Activated naive CD4-positive, alpha-beta T cell treated with anti-CD3 and anti-CD28 coated beads for 36 hours (primary cell): ENCODE measurements at regions of chr1 and their contacts with region 1.

Region 1: DNA sequence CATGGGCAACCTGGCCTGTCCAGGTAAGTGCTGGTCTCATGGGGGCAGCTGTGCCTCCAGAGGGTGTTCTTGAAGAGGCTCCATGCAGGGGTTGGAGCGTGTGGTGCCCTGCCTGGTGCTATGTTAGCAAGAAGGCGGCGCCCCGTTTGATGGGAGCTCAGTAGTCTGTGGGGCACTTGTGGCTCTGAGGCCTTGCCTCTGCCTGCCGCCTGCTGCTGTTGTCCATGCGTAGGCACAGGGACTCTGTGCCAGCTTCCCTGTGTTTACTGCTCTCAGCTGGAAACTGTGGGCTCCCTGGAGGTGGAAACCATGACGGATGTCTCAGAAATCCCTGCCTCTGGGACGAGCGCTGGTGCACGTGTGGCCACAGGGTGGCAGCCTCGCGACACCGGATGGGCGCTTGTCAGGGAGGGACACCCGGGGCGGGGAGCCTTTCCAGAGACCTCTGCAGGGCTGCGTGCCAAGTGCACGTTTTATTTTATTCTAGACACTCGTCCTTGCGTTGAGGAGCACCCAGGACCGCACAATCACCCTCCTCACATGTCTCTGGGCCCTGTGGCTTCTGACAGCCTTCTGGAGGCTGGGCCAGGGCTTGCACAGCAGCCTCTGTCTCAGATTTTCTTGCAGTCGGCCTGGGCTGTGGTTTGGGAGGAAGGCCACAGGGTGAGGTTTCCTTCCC is 27.1 kb downstream of the SNAP47 start:
- DNase-seq: peak; percentile 91
- H3K4me3 Mint-ChIP-seq: no peak overlapping the region
- H3K27ac Mint-ChIP-seq: no peak overlapping the region
- H3K4me1 Mint-ChIP-seq: peaks cover 86% of the 10 kb centered on the region
- H3K27me3 Mint-ChIP-seq: no peaks in the 10 kb centered on the region

Region 2: DNA sequence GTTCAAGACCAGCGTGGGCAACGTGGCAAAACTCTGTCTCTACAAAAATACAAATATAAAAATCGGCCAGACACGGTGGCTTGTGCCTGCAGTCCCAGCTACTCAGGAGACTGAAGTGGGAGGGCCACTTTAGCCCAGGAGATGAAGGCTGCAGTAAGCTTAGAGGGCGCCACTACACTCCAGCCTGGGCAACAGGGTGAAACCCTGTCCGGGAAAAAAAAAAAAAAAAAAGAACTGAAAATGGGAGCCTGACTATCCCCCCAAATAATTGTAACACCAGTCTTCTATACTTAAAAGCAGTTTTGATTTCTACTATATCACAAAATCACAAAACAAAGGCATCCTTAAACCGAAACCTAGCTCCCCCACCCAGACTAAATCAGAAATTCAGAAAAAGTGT is 504.4 kb before region 1 on chr1:
- CTCF ChIA-PET with region 1: no interaction called
- intact Hi-C with region 1: no loop called
- DNase-seq: no peak
- H3K4me3 Mint-ChIP-seq: no peak overlapping the region
- H3K27ac Mint-ChIP-seq: no peak overlapping the region
- H3K4me1 Mint-ChIP-seq: no peaks in the 10 kb centered on the region
- H3K27me3 Mint-ChIP-seq: peaks cover 3% of the 10 kb centered on the region

Region 3: GRCh38 chr1:227563324-227564201 is 198.8 kb before region 1 on chr1 and contains the start of gene ZNF678:
- CTCF ChIA-PET with region 1: interaction called, 3 read pairs
- intact Hi-C with region 1: loop called (anchors 10 kb)
- DNase-seq: peak; percentile 96
- H3K4me3 Mint-ChIP-seq: peak within 1 kb of the TSS; percentile 94
- H3K27ac Mint-ChIP-seq: peak within 1 kb of the TSS; percentile 93
- H3K4me1 Mint-ChIP-seq: peaks cover 37% of the 10 kb centered on the region
- H3K27me3 Mint-ChIP-seq: peaks cover 26% of the 10 kb centered on the region
- total RNA-seq, gene ZNF678: 9.5 TPM

Region 4: GRCh38 chr1:227734856-227735538 is 27.4 kb before region 1 on chr1 and contains the starts of genes JMJD4 and SNAP47:
- CTCF ChIA-PET with region 1: interaction called, 3 read pairs
- intact Hi-C with region 1: loop called (anchors 1 kb)
- DNase-seq: peak; percentile 93
- H3K4me3 Mint-ChIP-seq: peak within 1 kb of the TSS; percentile 92
- H3K27ac Mint-ChIP-seq: peak within 1 kb of the TSS; percentile 76
- H3K4me1 Mint-ChIP-seq: peaks cover 40% of the 10 kb centered on the region
- H3K27me3 Mint-ChIP-seq: no peaks in the 10 kb centered on the region
- total RNA-seq, gene JMJD4: 11.3 to 11.7 TPM
- total RNA-seq, gene SNAP47: 18.7 to 23.0 TPM

Region 5: GRCh38 chr1:227855687-227856086 is 93.3 kb after region 1 on chr1:
- CTCF ChIA-PET with region 1: no interaction called
- intact Hi-C with region 1: no loop called
- DNase-seq: no peak
- H3K4me3 Mint-ChIP-seq: no peak overlapping the region
- H3K27ac Mint-ChIP-seq: no peak overlapping the region
- H3K4me1 Mint-ChIP-seq: no peaks in the 10 kb centered on the region
- H3K27me3 Mint-ChIP-seq: no peaks in the 10 kb centered on the region

Region 6: GRCh38 chr1:227886993-227887696 is 124.8 kb after region 1 on chr1:
- CTCF ChIA-PET with region 1: no interaction called
- intact Hi-C with region 1: loop called (anchors 5 kb)
- DNase-seq: peak; percentile 43
- H3K4me3 Mint-ChIP-seq: peak overlapping the region; percentile 32
- H3K27ac Mint-ChIP-seq: peak overlapping the region; percentile 41
- H3K4me1 Mint-ChIP-seq: peaks cover 30% of the 10 kb centered on the region
- H3K27me3 Mint-ChIP-seq: no peaks in the 10 kb centered on the region

Region 7: GRCh38 chr1:227946624-227947385 is 184.4 kb after region 1 on chr1:
- CTCF ChIA-PET with region 1: interaction called, 9 read pairs
- intact Hi-C with region 1: loop called (anchors 1 kb)
- DNase-seq: peak; percentile 69
- H3K4me3 Mint-ChIP-seq: peak overlapping the region; percentile 63
- H3K27ac Mint-ChIP-seq: no peak overlapping the region
- H3K4me1 Mint-ChIP-seq: peaks cover 5% of the 10 kb centered on the region
- H3K27me3 Mint-ChIP-seq: peaks cover 7% of the 10 kb centered on the region